Heart left ventricle (tissue), 16 donors: ENCODE measurements at regions of chr20 and their contacts with region 1.

Region 1: GRCh38 chr20:44460795-44461141 is 14.9 kb upstream of the TTPAL start:
- DNase-seq: no peak
- ATAC-seq: peak in 2 of 4 donors; percentile 45 to 47
- H3K4me3 ChIP-seq: no peak overlapping the region
- H3K27ac ChIP-seq: no peak overlapping the region
- H3K4me1 ChIP-seq: no peaks in the 10 kb centered on the region
- H3K27me3 ChIP-seq: no peaks in the 10 kb centered on the region
- CTCF ChIP-seq: peak in 10 of 12 donors; percentile 16 to 56 (median 38)
- POLR2A ChIP-seq: no peak

Region 2: GRCh38 chr20:44210422-44211176 is 250.2 kb before region 1 on chr20 and contains the start of gene OSER1:
- intact Hi-C with region 1: loop called in 8 of 10 experiments (anchors 2 to 10 kb)
- DNase-seq: peak; percentile 97 to 99 (median 97)
- ATAC-seq: peak; percentile 90 to 95 (median 93)
- H3K4me3 ChIP-seq: peak within 1 kb of the TSS; percentile 63 to 98 (median 84)
- H3K27ac ChIP-seq: peak within 1 kb of the TSS; percentile 85 to 97 (median 92)
- H3K4me1 ChIP-seq: peaks cover 7 to 56% (median 42%) of the 10 kb centered on the region in 12 donors
- H3K27me3 ChIP-seq: no peaks in the 10 kb centered on the region
- CTCF ChIP-seq: no peak
- POLR2A ChIP-seq: peak; percentile 77 to 89
- total RNA-seq, gene OSER1: 20.6 to 39.0 (median 34.1) TPM

Region 3: GRCh38 chr20:44217342-44218092 is 243.3 kb before region 1 on chr20:
- intact Hi-C with region 1: loop called (anchors 2 to 10 kb)
- DNase-seq: peak; percentile 64 to 84 (median 69)
- ATAC-seq: peak in 3 of 4 donors; percentile 76 to 81 (median 78)
- H3K4me3 ChIP-seq: peak overlapping the region in 11 of 12 donors; percentile 3 to 46 (median 33)
- H3K27ac ChIP-seq: peak overlapping the region in 10 of 12 donors; percentile 12 to 72 (median 41)
- H3K4me1 ChIP-seq: peaks cover 0 to 21% (median 11%) of the 10 kb centered on the region in 12 donors
- H3K27me3 ChIP-seq: no peaks in the 10 kb centered on the region
- CTCF ChIP-seq: peak; percentile 76 to 92 (median 86)
- POLR2A ChIP-seq: no peak

Region 4: GRCh38 chr20:44310664-44311639 is 149.8 kb before region 1 on chr20 and contains the start of gene FITM2:
- intact Hi-C with region 1: loop called in 1 of 10 experiments (anchors 10 kb)
- DNase-seq: peak; percentile 98 to 100 (median 99)
- ATAC-seq: peak; percentile 72 to 90 (median 88)
- H3K4me3 ChIP-seq: peak within 1 kb of the TSS; percentile 62 to 98 (median 81)
- H3K27ac ChIP-seq: peak within 1 kb of the TSS; percentile 66 to 95 (median 88)
- H3K4me1 ChIP-seq: peaks cover 0 to 47% (median 17%) of the 10 kb centered on the region in 12 donors
- H3K27me3 ChIP-seq: no peaks in the 10 kb centered on the region
- CTCF ChIP-seq: peak; percentile 92 to 98 (median 96)
- POLR2A ChIP-seq: peak in 1 of 2 donors; percentile 80
- total RNA-seq, gene FITM2: 71.7 to 165 (median 125) TPM

Region 5: DNA sequence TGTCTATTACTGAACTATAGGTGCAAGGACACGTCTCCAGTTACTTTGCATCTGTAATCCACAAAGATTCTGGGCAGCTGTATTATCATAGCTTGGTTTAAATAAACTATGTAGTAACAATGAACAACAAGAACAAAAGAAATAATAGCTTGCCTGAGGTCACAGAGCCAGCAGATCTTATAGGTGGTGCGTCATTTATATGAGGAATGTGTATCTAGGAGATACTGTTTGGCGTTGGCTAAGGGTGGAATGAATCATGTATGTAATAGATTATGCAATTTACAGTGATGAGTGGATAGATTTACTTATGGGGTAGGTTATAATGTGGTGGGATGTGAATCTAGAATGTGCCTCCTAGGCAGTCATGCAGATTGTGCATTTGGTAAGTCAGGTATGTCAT is 62.5 kb before region 1 on chr20:
- intact Hi-C with region 1: loop called in 2 of 10 experiments (anchors 5 to 10 kb)
- DNase-seq: no peak
- ATAC-seq: no peak
- H3K4me3 ChIP-seq: no peak overlapping the region
- H3K27ac ChIP-seq: no peak overlapping the region
- H3K4me1 ChIP-seq: no peaks in the 10 kb centered on the region
- H3K27me3 ChIP-seq: peaks cover 0 to 10% (median 0%) of the 10 kb centered on the region in 9 donors
- CTCF ChIP-seq: no peak
- POLR2A ChIP-seq: no peak

Region 6: DNA sequence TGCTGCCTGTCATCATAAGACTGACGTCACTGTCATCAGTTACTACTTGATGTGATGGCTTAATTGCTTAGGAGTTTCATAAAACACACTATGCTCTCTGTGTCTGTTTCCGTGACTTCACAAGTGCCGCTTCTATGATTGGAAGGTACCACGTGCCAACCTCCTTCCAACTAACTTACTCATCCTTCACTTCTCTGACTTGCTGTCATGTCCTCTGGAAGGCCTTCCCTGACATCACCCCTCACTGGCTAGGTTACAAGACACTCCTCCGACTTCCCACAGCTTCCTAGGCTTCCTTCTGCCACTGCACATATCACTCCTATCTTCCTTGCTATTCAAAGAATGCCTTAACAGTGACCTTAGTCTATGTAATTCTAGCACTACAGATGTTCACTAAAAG is 40.7 kb after region 1 on chr20:
- intact Hi-C with region 1: no loop called
- DNase-seq: peak in 1 of 5 donors; percentile 62
- ATAC-seq: peak in 3 of 4 donors; percentile 48 to 84 (median 84)
- H3K4me3 ChIP-seq: no peak overlapping the region
- H3K27ac ChIP-seq: peak overlapping the region in 1 of 12 donors; percentile 69
- H3K4me1 ChIP-seq: peaks cover 0 to 18% (median 10%) of the 10 kb centered on the region in 12 donors
- H3K27me3 ChIP-seq: no peaks in the 10 kb centered on the region
- CTCF ChIP-seq: no peak
- POLR2A ChIP-seq: no peak